Activated CD8-positive, alpha-beta memory T cell treated with anti-CD3 and anti-CD28 coated beads, Interleukin-2, amount 10 ng/mL, durations not matched to agents 7 days and 5 days (primary cell): ENCODE measurements at regions of chr6 and their contacts with region 1.

Region 1: DNA sequence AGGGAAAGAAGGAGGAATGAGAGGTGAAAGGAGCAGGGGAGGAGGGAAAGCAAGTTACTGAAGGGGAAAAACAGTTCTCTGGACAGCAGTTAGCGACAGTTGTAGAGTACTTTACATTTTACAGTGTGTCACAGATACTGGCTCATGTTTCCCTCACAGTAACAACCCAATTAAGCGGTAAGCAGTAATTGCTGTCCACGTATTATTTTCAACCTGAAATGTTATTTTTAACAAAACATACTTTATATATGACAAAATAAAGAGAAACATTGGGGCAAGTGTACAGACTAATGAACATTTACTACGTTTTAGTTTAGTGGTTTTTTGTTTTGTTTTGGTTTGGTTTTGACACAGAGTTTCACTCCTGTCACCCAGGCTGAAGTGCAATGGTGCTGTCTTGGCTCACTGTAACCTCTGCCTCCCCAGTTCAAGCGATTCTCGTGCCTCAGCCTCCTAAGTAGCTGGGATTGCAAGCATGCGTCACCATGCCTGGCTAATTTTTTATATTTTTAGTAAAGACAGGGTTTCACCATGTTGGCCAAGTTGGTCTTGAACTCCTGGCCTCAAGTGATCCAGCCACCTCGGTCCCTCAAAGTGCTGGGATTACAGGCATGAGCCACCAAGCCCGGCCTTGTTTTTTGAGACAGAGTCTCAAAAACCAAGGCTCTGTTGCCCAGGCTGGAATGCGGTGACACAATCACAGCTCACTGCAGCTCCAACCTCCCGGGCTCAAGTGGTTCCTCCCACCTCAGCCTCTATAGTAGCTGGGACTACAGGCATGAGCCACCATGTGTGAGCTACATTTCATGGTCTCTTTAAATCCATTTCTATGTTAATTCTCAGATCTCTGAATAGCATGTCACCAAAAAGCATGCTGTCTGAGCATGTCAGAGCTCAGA is 22.6 kb upstream of the BTN3A2 start:
- DNase-seq: peak; percentile 60
- ATAC-seq: peak; percentile 44
- H3K4me3 Mint-ChIP-seq: peak overlapping the region; percentile 84
- H3K27ac Mint-ChIP-seq: peak overlapping the region; percentile 87
- H3K4me1 Mint-ChIP-seq: peaks cover 29% of the 10 kb centered on the region
- H3K27me3 Mint-ChIP-seq: peaks cover 11% of the 10 kb centered on the region

Region 2: GRCh38 chr6:26322645-26323482 is 19.5 kb before region 1 on chr6:
- CTCF ChIA-PET with region 1: interaction called, 11 read pairs
- DNase-seq: peak; percentile 75
- ATAC-seq: peak; percentile 58
- H3K4me3 Mint-ChIP-seq: peak overlapping the region; percentile 89
- H3K27ac Mint-ChIP-seq: peak overlapping the region; percentile 87
- H3K4me1 Mint-ChIP-seq: peaks cover 50% of the 10 kb centered on the region
- H3K27me3 Mint-ChIP-seq: peaks cover 22% of the 10 kb centered on the region

Region 3: GRCh38 chr6:26363882-26364701 is 21.7 kb after region 1 on chr6:
- CTCF ChIA-PET with region 1: interaction called, 11 read pairs
- DNase-seq: peak; percentile 41
- ATAC-seq: peak; percentile 34
- H3K4me3 Mint-ChIP-seq: no peak overlapping the region
- H3K27ac Mint-ChIP-seq: no peak overlapping the region
- H3K4me1 Mint-ChIP-seq: peaks cover 43% of the 10 kb centered on the region
- H3K27me3 Mint-ChIP-seq: no peaks in the 10 kb centered on the region

Region 4: GRCh38 chr6:26537846-26538571 is 195.7 kb after region 1 on chr6 and contains the start of gene HMGN4:
- CTCF ChIA-PET with region 1: interaction called, 15 read pairs
- DNase-seq: peak; percentile 85
- ATAC-seq: peak; percentile 73
- H3K4me3 Mint-ChIP-seq: peak within 1 kb of the TSS; percentile 87
- H3K27ac Mint-ChIP-seq: peak within 1 kb of the TSS; percentile 95
- H3K4me1 Mint-ChIP-seq: peaks cover 58% of the 10 kb centered on the region
- H3K27me3 Mint-ChIP-seq: no peaks in the 10 kb centered on the region
- total RNA-seq, gene HMGN4: 75.6 to 78.4 TPM

Region 5: GRCh38 chr6:26568601-26569432 is 226.5 kb after region 1 on chr6:
- CTCF ChIA-PET with region 1: interaction called, 68 read pairs
- DNase-seq: peak; percentile 97
- ATAC-seq: peak; percentile 80
- H3K4me3 Mint-ChIP-seq: peak overlapping the region; percentile 98
- H3K27ac Mint-ChIP-seq: peak overlapping the region; percentile 93
- H3K4me1 Mint-ChIP-seq: peaks cover 38% of the 10 kb centered on the region
- H3K27me3 Mint-ChIP-seq: peaks cover 5% of the 10 kb centered on the region